CD14-positive monocyte (primary cell): ENCODE measurements at regions of chr17 and their contacts with region 1.

Region 1: DNA sequence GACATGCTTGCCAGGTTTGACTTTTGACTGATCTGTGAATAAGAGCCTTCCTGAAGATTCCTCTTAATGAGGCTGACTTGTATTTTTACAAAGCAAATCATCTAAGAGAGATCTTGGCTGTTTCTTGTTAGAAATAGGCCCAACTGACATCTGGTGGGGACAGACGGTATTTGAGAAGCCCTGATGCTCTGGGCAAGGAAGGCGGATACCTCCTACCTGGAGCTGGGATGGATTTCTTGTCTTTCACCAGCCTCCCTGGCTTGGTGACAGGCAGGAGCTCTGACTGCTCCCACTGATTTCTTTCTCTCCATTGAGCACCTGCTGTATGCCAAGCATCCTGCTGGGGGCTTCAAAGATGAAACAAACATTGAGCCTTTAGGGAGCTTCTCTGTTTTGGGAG is 40.4 kb downstream of the AKAP1 start:
- DNase-seq: no peak
- H3K4me3 ChIP-seq: no peak overlapping the region
- H3K4me3 Mint-ChIP-seq: no peak overlapping the region
- H3K27ac ChIP-seq: no peak overlapping the region
- H3K27ac Mint-ChIP-seq: no peak overlapping the region
- H3K4me1 ChIP-seq: no peaks in the 10 kb centered on the region
- H3K4me1 Mint-ChIP-seq: no peaks in the 10 kb centered on the region
- H3K27me3 ChIP-seq: no peaks in the 10 kb centered on the region
- H3K27me3 Mint-ChIP-seq: peaks cover 0 to 1% (median 0%) of the 10 kb centered on the region in 3 donors
- CTCF ChIP-seq: no peak

Region 2: DNA sequence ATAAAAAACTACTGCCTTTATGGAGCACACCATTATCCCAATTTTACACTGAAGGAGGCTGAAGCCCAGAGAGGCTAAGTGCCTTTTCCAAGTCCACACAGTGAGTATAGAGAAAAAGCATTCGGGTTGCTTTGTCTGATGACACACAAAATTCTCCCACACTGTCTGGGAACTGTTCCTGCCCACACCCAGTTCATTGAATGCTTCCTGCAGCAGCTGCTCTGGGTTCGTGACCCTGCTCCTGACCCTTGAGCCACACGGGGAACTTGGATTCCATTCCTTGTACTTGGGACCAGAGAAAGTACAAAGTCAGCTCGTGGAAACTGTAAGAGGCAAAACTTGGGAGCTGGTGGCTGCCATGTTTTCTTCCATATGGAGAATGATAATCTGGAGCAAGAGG is 17.5 kb after region 1 on chr17:
- intact Hi-C with region 1: no loop called
- DNase-seq: no peak
- H3K4me3 ChIP-seq: no peak overlapping the region
- H3K4me3 Mint-ChIP-seq: no peak overlapping the region
- H3K27ac ChIP-seq: no peak overlapping the region
- H3K27ac Mint-ChIP-seq: no peak overlapping the region
- H3K4me1 ChIP-seq: no peaks in the 10 kb centered on the region
- H3K4me1 Mint-ChIP-seq: peaks cover 4% of the 10 kb centered on the region
- H3K27me3 ChIP-seq: no peaks in the 10 kb centered on the region
- H3K27me3 Mint-ChIP-seq: peaks cover 0 to 7% (median 0%) of the 10 kb centered on the region in 3 donors
- CTCF ChIP-seq: no peak

Region 3: GRCh38 chr17:57338257-57338914 is 213.0 kb after region 1 on chr17:
- intact Hi-C with region 1: no loop called
- DNase-seq: no peak
- H3K4me3 ChIP-seq: no peak overlapping the region
- H3K4me3 Mint-ChIP-seq: peak overlapping the region in 1 of 2 donors; percentile 61
- H3K27ac ChIP-seq: no peak overlapping the region
- H3K27ac Mint-ChIP-seq: no peak overlapping the region
- H3K4me1 ChIP-seq: peaks cover 6 to 9% of the 10 kb centered on the region in 2 donors
- H3K4me1 Mint-ChIP-seq: peaks cover 15% of the 10 kb centered on the region
- H3K27me3 ChIP-seq: peaks cover 0 to 14% of the 10 kb centered on the region in 2 donors
- H3K27me3 Mint-ChIP-seq: peaks cover 20 to 64% (median 33%) of the 10 kb centered on the region in 3 donors
- CTCF ChIP-seq: no peak

Region 4: GRCh38 chr17:57783106-57783742 is 657.8 kb after region 1 on chr17:
- intact Hi-C with region 1: loop called in 1 of 2 experiments (anchors 5 kb)
- DNase-seq: peak; percentile 49 to 66 (median 51)
- H3K4me3 ChIP-seq: peak overlapping the region in 1 of 3 experiments; percentile 51
- H3K4me3 Mint-ChIP-seq: peak overlapping the region in 1 of 2 donors; percentile 54
- H3K27ac ChIP-seq: no peak overlapping the region
- H3K27ac Mint-ChIP-seq: no peak overlapping the region
- H3K4me1 ChIP-seq: peaks cover 10 to 15% of the 10 kb centered on the region in 2 donors
- H3K4me1 Mint-ChIP-seq: peaks cover 5% of the 10 kb centered on the region
- H3K27me3 ChIP-seq: peaks cover 0 to 2% of the 10 kb centered on the region in 2 donors
- H3K27me3 Mint-ChIP-seq: peaks cover 4 to 18% (median 17%) of the 10 kb centered on the region in 3 donors
- CTCF ChIP-seq: peak; percentile 96